Esophagus muscularis mucosa (tissue), 4 donors: ENCODE measurements at regions of chr16 and their contacts with region 1.

Region 1: DNA sequence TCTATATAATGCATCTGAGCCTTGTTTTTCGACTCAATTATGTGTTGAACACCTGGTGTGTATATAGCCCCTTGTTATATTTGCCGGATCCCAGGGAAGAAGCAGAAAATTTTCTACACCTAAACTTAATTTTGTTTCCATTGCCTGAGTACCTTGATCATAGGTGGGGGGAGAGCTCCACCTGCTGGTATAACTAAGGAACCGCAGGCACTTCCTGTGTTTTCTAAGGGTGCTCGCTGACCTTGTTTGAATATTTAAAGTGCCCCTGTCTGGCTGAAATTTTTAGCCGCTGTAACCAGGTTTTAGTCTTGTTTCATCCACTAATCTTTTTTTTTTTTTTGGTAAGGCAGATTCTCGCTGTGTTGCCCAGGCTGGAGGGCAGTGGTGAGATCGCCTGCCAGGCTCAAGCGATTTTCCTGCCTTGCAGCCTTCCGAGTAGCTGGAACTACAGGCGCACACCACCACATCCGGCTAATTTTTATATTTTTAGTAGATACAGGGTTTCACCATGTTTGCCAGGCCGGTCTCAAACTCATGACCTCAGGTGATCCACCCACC is 6.5 kb upstream of the NUBP1 start:
- DNase-seq: peak; percentile 90
- H3K4me3 ChIP-seq: peak overlapping the region in 2 of 4 donors; percentile 13
- H3K27ac ChIP-seq: peak overlapping the region; percentile 58 to 70 (median 66)
- H3K4me1 ChIP-seq: peaks cover 19 to 32% (median 23%) of the 10 kb centered on the region in 4 donors
- H3K27me3 ChIP-seq: no peaks in the 10 kb centered on the region
- CTCF ChIP-seq: peak; percentile 92 to 95 (median 94)
- EP300 ChIP-seq: no peak
- POLR2A ChIP-seq: no peak

Region 2: DNA sequence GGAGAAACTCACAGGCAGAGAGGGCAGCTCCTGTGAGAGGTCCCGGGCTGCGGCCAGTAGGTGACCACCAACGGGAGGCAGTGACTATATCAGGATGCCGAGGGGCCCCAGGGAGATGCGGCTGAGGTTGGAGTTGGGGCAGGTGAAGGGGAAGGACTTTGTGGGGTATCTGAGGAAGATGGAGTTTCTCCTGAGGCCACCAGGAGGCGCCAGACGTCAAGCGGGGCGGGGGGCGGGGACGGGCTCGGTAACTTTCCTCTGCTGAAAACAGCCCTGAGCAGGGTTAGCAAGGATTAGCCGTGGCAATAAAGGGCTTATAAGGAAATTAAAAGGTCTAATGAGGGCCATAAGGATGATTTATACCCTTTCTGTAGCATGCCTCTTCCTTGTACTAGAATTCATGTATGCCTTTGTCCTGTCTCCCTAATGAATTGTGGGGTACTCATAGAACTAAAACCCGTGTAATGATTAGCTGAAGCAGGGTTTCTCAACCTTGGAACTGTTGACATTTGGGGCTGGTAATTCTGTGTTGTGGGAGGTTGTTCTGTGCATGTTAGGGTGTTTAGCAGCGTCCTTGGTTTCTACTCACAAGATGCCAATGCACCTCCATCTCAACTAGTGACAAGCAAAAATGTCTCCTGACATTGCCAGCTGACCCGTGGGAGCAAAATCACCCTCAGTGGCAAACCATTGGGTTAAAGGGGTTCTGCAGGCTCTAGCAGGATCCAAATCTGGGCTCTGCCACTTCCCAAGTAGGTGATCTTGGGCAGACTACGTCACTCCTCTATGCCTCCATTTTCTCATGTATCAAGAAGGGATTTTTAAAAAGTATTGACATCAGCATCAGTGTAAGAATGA is 480.1 kb before region 1 on chr16:
- intact Hi-C with region 1: loop called (anchors 2 kb)
- DNase-seq: no peak
- H3K4me3 ChIP-seq: no peak overlapping the region
- H3K27ac ChIP-seq: no peak overlapping the region
- H3K4me1 ChIP-seq: peaks cover 0 to 5% (median 0%) of the 10 kb centered on the region in 4 donors
- H3K27me3 ChIP-seq: peaks cover 0 to 30% (median 0%) of the 10 kb centered on the region in 4 donors
- CTCF ChIP-seq: peak; percentile 49 to 82 (median 64)
- EP300 ChIP-seq: no peak
- POLR2A ChIP-seq: no peak

Region 3: GRCh38 chr16:10521681-10522274 is 215.4 kb before region 1 on chr16:
- intact Hi-C with region 1: loop called (anchors 2 kb)
- DNase-seq: no peak
- H3K4me3 ChIP-seq: no peak overlapping the region
- H3K27ac ChIP-seq: no peak overlapping the region
- H3K4me1 ChIP-seq: peaks cover 0 to 7% (median 0%) of the 10 kb centered on the region in 4 donors
- H3K27me3 ChIP-seq: no peaks in the 10 kb centered on the region
- CTCF ChIP-seq: peak; percentile 64 to 88 (median 65)
- EP300 ChIP-seq: no peak
- POLR2A ChIP-seq: no peak

Region 4: GRCh38 chr16:10579965-10580882 is 156.9 kb before region 1 on chr16 and contains the start of gene EMP2:
- intact Hi-C with region 1: loop called (anchors 5 kb)
- DNase-seq: no peak
- H3K4me3 ChIP-seq: peak within 1 kb of the TSS; percentile 72 to 94 (median 85)
- H3K27ac ChIP-seq: peak within 1 kb of the TSS; percentile 88 to 97 (median 93)
- H3K4me1 ChIP-seq: peaks cover 49 to 64% (median 59%) of the 10 kb centered on the region in 4 donors
- H3K27me3 ChIP-seq: no peaks in the 10 kb centered on the region
- CTCF ChIP-seq: peak; percentile 53 to 68 (median 54)
- EP300 ChIP-seq: no peak
- POLR2A ChIP-seq: peak; percentile 68
- total RNA-seq, gene EMP2: 44.1 to 87.1 (median 57.3) TPM

Region 5: DNA sequence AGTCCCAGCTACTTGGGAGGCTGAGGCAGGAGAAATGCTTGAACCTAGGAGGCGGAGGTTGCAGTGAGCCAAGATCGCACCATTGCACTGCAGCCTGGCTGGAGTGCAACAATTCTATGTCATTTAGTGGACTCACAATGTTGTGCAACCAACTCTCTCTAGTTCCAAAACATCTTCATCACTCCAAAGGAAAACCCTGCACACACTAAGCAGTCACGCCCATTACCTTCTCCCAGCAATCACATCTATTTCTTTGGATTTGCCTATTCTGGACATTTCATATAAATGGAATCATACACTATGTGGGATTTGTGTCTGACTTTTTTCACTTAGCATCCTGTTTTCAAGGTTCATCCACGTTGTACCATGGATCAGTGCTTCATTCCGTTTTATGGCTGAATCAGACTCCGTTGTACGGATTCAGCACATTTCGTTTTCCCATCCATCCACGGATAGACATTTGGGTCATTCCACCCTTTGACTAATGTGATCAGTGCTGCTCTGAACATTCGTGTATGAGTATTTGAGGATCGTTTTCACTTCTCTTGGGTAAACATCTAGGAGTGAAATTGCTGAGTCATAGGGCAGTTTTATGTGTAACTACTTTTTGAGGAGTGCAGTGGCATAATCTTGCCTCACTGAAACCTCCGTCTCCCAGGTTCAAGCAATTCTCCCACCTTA is 111.4 kb before region 1 on chr16:
- intact Hi-C with region 1: no loop called
- DNase-seq: no peak
- H3K4me3 ChIP-seq: no peak overlapping the region
- H3K27ac ChIP-seq: no peak overlapping the region
- H3K4me1 ChIP-seq: no peaks in the 10 kb centered on the region
- H3K27me3 ChIP-seq: peaks cover 0 to 12% (median 0%) of the 10 kb centered on the region in 4 donors
- CTCF ChIP-seq: no peak
- EP300 ChIP-seq: no peak
- POLR2A ChIP-seq: no peak

Region 6: DNA sequence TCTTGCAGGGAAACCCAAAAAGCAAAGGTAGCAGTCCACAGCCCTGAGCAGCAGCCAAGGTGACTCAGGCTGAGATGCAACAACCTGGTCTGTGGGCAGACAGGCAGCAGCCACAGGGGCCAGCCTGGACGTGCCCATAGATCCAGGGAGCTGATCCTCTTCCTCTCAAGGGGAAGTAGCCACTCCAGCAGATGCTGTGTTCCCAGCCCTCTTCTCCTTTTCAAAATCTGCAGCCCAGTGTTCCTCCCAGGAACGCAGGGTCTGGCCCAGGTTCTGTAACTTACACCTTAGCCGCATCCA is 122.6 kb after region 1 on chr16:
- intact Hi-C with region 1: no loop called
- DNase-seq: no peak
- H3K4me3 ChIP-seq: no peak overlapping the region
- H3K27ac ChIP-seq: no peak overlapping the region
- H3K4me1 ChIP-seq: no peaks in the 10 kb centered on the region
- H3K27me3 ChIP-seq: peaks cover 0 to 7% (median 0%) of the 10 kb centered on the region in 4 donors
- CTCF ChIP-seq: no peak
- EP300 ChIP-seq: no peak
- POLR2A ChIP-seq: no peak